SK-MEL-5 (cell line): ENCODE measurements at regions of chr20 and their contacts with region 1.

Region 1: GRCh38 chr20:57947421-57948179 is 237.8 kb upstream of the PMEPA1 start:
- DNase-seq: no peak

Region 2: DNA sequence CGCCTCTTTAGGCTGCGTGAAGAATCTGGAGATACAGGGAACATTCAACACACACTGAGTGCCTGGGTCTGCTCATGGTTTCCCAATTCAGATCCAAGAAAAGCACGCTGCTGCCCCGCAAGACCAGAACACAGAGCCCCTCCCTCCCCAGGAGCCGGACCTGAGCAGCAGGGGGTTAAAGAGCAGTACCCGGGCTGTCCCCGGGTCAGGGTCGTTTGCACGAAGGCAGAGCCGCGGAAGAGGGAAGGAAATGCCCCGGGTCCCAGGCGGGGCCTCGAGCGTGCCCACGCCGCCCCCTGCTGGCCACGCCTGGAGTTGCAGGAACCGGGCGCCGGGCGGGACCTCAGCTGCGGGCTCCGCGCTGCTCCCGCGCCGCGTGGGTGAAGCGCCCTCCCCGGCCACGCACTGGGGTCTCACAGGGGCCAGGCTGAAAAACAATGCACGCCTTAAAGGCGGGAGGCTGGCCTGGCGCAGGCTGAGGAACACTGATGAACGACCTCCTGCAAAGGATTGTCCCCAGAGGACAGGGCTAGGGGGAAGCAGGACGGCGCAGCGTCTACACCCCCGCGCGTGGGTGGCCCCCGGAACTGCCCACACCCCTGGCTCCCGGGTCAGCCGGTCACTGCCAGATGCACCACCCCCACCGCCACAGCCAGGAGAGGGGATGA is 232.0 kb after region 1 on chr20:
- in situ Hi-C with region 1: loop called (anchors 25 kb)
- DNase-seq: peak; percentile 60